Left ventricle myocardium inferior (tissue), 1 donor: ENCODE measurements at regions of chr12 and their contacts with region 1.

Region 1: DNA sequence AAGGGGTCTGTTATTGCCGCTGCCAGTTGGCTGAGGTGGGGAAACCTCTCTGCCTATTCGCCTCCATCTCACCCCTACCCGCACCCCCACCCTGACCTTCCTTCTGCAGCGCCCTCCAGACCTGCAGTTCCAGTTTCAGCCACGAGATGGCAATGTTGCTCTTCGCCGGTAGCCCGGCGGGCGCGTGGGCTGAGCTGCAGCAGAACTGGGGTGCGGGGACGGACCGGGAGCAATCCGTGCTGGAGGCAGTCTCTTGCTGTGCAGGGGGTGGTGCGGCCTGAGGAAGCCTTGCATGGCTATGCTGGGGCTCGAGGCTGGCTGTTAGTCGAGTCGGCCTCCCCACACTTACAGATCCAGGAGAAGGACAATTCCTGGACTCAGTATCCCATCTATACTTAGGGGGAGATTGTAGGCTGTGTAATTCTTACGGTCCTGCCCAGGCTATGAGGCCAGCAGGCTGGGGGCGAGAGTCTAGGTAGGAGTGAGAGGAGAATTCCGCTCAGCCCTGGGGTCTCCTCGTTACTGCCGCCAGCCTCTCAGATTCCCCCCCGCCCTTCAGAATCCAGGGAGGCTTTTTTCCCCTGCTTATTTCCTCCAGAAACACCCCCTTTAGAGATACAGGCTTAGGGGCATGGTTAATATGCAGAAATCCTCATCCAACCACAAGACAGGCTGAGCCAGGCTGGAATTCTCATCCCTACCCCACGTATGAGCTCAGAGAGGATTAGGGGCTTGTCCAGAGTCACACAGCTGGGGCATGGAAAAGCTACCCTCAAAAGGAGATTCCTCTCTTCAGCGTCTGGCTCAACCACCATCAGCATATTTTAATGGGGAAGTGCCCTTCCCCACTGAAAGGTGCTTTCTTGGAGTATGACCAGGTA is 118.2 kb downstream of the AACS start:
- DNase-seq: peak; percentile 73
- H3K4me3 ChIP-seq: peak overlapping the region; percentile 29
- H3K27ac ChIP-seq: no peak overlapping the region
- H3K4me1 ChIP-seq: peaks cover 30% of the 10 kb centered on the region
- H3K27me3 ChIP-seq: peaks cover 72% of the 10 kb centered on the region
- CTCF ChIP-seq: peak; percentile 99

Region 2: GRCh38 chr12:125402874-125403789 is 219.7 kb after region 1 on chr12:
- intact Hi-C with region 1: loop called (anchors 10 kb)
- DNase-seq: no peak
- H3K4me3 ChIP-seq: no peak overlapping the region
- H3K27ac ChIP-seq: no peak overlapping the region
- H3K4me1 ChIP-seq: no peaks in the 10 kb centered on the region
- H3K27me3 ChIP-seq: peaks cover 35% of the 10 kb centered on the region
- CTCF ChIP-seq: peak; percentile 68

Region 3: DNA sequence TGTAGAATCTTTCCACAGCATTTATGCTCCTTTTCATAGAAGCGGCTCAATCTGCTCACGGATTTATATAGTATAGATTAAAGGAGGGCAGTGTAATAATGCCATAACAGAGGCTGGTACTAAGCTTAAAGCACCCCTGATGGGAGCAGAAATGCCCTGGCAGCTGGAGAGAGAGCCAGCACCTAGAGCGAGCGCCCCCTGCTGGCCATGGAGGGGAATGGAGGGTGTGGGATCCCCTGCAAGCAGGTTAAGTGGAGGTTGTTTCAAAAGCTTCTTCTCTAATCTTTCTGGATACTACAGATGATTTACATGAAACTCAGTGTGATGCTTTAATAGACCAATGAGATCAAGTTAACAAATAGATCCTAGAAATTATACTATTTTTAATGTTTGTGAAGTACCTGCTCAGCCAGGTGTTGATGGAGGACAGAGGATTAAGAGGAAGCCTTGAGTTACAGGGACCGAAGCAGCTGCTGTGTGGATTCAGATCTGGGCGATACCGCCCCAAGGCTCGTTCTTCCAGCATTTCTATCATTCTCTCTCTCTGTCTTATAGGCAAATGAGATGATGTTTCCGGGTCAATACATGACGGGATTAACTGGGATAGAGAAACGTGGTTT is 1564.2 kb after region 1 on chr12:
- intact Hi-C with region 1: loop called (anchors 10 kb)
- DNase-seq: peak; percentile 42
- H3K4me3 ChIP-seq: no peak overlapping the region
- H3K27ac ChIP-seq: no peak overlapping the region
- H3K4me1 ChIP-seq: no peaks in the 10 kb centered on the region
- H3K27me3 ChIP-seq: peaks cover 47% of the 10 kb centered on the region
- CTCF ChIP-seq: peak; percentile 95